HCT116 (cell line): ENCODE measurements at regions of chr2 and their contacts with region 1.

Region 1: DNA sequence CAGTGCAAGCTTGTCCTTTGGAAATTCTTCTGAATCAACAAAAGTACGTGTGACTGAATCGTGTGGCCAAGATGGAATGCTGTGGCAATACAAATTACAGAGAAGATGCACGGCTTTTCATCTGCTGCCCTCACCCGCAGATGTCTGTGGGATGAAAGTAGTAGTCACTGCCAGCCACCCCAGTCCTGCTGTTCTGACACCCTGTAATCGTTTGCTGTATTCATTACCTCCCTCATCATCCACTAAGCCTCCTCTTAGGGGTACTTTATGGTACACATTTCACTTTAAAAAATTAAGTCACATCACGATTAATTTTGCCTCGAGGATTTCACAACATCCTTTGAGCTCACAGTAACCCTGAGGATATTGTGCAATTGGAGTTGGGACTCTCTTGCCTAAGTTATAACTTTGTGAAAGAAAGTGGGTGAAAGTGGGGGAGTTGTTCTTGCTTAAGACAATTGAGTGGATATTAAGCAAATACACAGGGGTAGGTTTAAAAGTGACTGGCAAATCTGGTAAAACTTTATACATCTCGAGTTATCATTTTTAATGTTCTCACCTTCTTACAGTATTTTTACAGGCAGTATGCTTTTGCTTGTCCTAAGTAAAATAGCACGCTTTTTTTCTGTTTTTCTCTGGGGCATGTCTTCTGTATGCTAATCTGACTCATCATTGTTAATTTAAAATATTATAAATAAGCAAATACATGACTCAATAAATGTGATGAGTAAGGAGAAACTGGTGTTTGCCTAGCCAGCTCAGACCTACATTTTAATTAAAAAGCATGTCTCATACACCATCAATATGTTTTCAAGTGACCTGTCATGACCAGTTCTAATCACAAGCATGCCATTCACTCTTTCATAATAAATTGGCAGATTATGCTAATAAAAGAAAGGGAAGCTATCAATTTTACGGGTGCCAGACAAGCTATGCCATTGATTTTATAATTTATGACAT is 680.9 kb downstream of the IRS1 start:
- DNase-seq: peak; percentile 89
- ATAC-seq: peak; percentile 63
- H3K4me3 ChIP-seq: no peak overlapping the region
- H3K27ac ChIP-seq: peak overlapping the region; percentile 95
- H3K4me1 ChIP-seq: peaks cover 85 to 97% of the 10 kb centered on the region in 2 experiments
- H3K27me3 ChIP-seq: no peaks in the 10 kb centered on the region
- CTCF ChIP-seq: no peak
- POLR2A ChIP-seq: no peak
- RAD21 ChIP-seq: peak; percentile 38

Region 2: DNA sequence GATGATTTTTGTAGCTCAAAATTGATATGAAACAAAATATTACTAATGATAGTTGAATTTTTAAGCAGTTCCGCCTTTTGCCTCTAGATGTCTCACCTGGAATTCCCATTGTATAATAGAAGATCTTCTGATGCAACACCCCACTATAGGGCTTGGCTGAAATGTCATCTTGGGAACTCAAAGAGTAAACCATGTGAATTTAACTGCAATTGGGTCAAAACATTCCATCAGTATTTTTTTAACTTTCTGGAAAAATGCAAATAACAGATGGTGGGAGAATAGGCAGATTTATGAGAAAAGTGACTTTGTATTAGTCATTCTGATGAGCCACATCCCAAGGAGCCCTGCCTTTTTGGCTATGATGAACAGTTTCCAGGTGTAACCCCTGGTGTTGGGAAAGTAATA is 229.3 kb before region 1 on chr2:
- CTCF ChIA-PET with region 1: no interaction called
- POLR2A ChIA-PET with region 1: no interaction called
- RAD21 ChIA-PET with region 1: no interaction called
- intact Hi-C with region 1: loop called (anchors 1 kb)
- DNase-seq: peak; percentile 60
- ATAC-seq: peak; percentile 76
- H3K4me3 ChIP-seq: no peak overlapping the region
- H3K27ac ChIP-seq: peak overlapping the region; percentile 33; the same call in 1 of the 2 replicates
- H3K4me1 ChIP-seq: peaks cover 8 to 20% of the 10 kb centered on the region in 2 experiments; a peak in 3 of 4 replicates
- H3K27me3 ChIP-seq: no peaks in the 10 kb centered on the region
- CTCF ChIP-seq: peak; percentile 47 to 73 (median 65); a peak in 5 of 6 replicates
- POLR2A ChIP-seq: no peak
- RAD21 ChIP-seq: peak; percentile 90

Region 3: GRCh38 chr2:226063704-226064440 is 54.9 kb before region 1 on chr2:
- CTCF ChIA-PET with region 1: no interaction called
- POLR2A ChIA-PET with region 1: interaction called, 11 read pairs
- RAD21 ChIA-PET with region 1: interaction called in 1 of 2 experiments, 3 read pairs
- intact Hi-C with region 1: loop called (anchors 2 kb)
- DNase-seq: peak; percentile 96
- ATAC-seq: peak; percentile 88
- H3K4me3 ChIP-seq: no peak overlapping the region
- H3K27ac ChIP-seq: peak overlapping the region; percentile 99
- H3K4me1 ChIP-seq: peaks cover 43 to 73% of the 10 kb centered on the region in 2 experiments
- H3K27me3 ChIP-seq: no peaks in the 10 kb centered on the region
- CTCF ChIP-seq: no peak
- POLR2A ChIP-seq: no peak
- RAD21 ChIP-seq: peak; percentile 43; the same call in 1 of the 2 replicates

Region 4: GRCh38 chr2:226215902-226216503 is 97.3 kb after region 1 on chr2:
- CTCF ChIA-PET with region 1: no interaction called
- POLR2A ChIA-PET with region 1: interaction called, 3 read pairs
- RAD21 ChIA-PET with region 1: no interaction called
- intact Hi-C with region 1: loop called (anchors 2 kb)
- DNase-seq: peak; percentile 77
- ATAC-seq: peak; percentile 93
- H3K4me3 ChIP-seq: no peak overlapping the region
- H3K27ac ChIP-seq: peak overlapping the region; percentile 94
- H3K4me1 ChIP-seq: peaks cover 43 to 56% of the 10 kb centered on the region in 2 experiments
- H3K27me3 ChIP-seq: no peaks in the 10 kb centered on the region
- CTCF ChIP-seq: peak; percentile 48 to 93 (median 89); a peak in 5 of 6 replicates
- POLR2A ChIP-seq: no peak
- RAD21 ChIP-seq: peak; percentile 96

Region 5: DNA sequence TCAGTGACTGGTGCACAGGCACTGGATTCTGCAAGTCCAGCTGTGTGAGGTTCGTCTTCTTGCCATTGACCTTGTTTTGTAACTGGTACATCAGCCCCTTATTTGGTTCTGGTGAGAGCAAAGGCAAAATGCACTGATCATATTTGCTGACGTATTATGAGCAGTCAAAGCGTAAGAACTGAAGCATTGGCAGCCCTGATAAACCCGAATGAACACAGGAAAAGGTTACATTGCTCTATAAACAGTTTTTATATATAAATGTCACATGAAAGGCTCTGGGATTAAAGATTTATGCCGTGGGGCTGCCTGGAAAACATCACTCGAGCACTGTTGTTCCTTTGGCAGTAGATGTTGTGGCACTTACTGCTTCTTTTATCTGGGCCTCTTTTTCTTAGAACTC is 512.9 kb after region 1 on chr2:
- CTCF ChIA-PET with region 1: no interaction called
- POLR2A ChIA-PET with region 1: no interaction called
- RAD21 ChIA-PET with region 1: no interaction called
- intact Hi-C with region 1: no loop called
- DNase-seq: no peak
- ATAC-seq: no peak
- H3K4me3 ChIP-seq: no peak overlapping the region
- H3K27ac ChIP-seq: peak overlapping the region; percentile 64
- H3K4me1 ChIP-seq: peaks cover 16 to 17% of the 10 kb centered on the region in 2 experiments; a peak in 2 of 4 replicates
- H3K27me3 ChIP-seq: no peaks in the 10 kb centered on the region
- CTCF ChIP-seq: no peak
- POLR2A ChIP-seq: no peak
- RAD21 ChIP-seq: no peak

Region 6: GRCh38 chr2:226799181-226799975 is 680.6 kb after region 1 on chr2 and contains the start of gene IRS1:
- CTCF ChIA-PET with region 1: interaction called, 3 read pairs
- POLR2A ChIA-PET with region 1: no interaction called
- RAD21 ChIA-PET with region 1: interaction called in 1 of 2 experiments, 3 read pairs
- intact Hi-C with region 1: loop called (anchors 5 kb)
- DNase-seq: peak; percentile 32
- ATAC-seq: peak; percentile 71
- H3K4me3 ChIP-seq: peak within 1 kb of the TSS; percentile 55 to 71
- H3K27ac ChIP-seq: peak within 1 kb of the TSS; percentile 88
- H3K4me1 ChIP-seq: peaks cover 31 to 89% of the 10 kb centered on the region in 2 experiments; a peak in 3 of 4 replicates
- H3K27me3 ChIP-seq: no peaks in the 10 kb centered on the region
- CTCF ChIP-seq: peak in 1 of 3 experiments; percentile 26; a peak in 3 of 6 replicates
- POLR2A ChIP-seq: no peak
- RAD21 ChIP-seq: no peak
- total RNA-seq, gene IRS1: 88.8 TPM